Panc1 (cell line): ENCODE measurements at regions of chr15 and their contacts with region 1.

Region 1: DNA sequence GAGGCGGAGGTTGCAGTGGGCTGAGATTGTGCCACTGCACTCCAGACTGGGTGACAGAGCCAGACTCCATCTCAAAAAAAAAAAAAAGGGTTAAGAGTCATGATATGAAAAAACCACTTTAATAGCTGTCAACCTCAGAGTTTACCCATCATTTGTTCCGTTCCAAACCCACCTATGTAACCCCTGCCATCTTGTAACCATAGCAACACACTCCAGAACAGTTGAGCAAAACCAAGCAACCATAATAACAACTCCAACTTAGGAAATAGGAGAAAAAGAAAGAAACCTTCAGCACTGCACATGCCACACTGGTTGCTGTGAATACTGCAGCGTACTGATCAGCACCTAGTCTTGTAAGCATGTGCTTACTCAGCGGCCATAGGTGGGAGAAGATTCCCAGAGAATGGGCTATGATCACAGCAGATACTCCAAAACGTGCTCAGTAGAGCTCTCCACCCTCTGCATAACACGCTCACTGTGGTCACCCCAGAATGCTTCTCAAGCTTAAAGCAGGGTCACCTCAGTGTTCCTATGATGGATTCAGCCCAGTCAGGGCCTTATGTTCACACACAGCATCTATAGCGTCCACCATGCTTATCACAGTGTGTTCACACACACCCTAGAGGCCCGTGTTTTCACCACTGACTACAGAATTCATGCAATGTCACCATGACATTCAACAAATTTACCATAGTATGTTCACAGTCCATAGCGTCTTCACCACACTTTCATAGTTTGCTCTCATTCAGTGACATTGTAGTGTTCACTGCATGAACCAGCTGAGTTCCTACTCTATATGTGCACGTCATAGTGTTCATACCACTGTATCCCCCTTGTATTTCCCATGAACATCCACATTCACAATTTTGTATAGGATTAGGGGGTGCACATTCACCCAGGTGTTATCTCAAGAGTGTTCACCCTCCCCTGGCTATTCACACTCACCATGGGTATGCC is 6.5 kb upstream of the CILP start:
- DNase-seq: no peak
- ATAC-seq: 0 out of 2 replicates have a peak, but pooled peaks have one; percentile 18
- H3K4me3 ChIP-seq: no peak overlapping the region
- H3K27ac ChIP-seq: no peak overlapping the region
- H3K4me1 ChIP-seq: no peaks in the 10 kb centered on the region
- H3K27me3 ChIP-seq: no peaks in the 10 kb centered on the region
- CTCF ChIP-seq: no peak

Region 2: GRCh38 chr15:64315136-64315660 is 902.6 kb before region 1 on chr15:
- CTCF ChIA-PET with region 1: no interaction called
- POLR2A ChIA-PET with region 1: interaction called, 13 read pairs
- in situ Hi-C with region 1: no loop called
- intact Hi-C with region 1: no loop called
- DNase-seq: no peak
- ATAC-seq: no peak
- H3K4me3 ChIP-seq: no peak overlapping the region
- H3K27ac ChIP-seq: no peak overlapping the region
- H3K4me1 ChIP-seq: no peaks in the 10 kb centered on the region
- H3K27me3 ChIP-seq: no peaks in the 10 kb centered on the region
- CTCF ChIP-seq: no peak